Prostate gland (tissue), 2 donors: ENCODE measurements at regions of chr12 and their contacts with region 1.

Region 1: GRCh38 chr12:26434299-26435068 is 239.1 kb downstream of the SSPN start:
- DNase-seq: no peak
- H3K4me3 ChIP-seq: no peak overlapping the region
- H3K27ac ChIP-seq: no peak overlapping the region
- H3K4me1 ChIP-seq: no peaks in the 10 kb centered on the region
- H3K27me3 ChIP-seq: no peaks in the 10 kb centered on the region
- CTCF ChIP-seq: peak in 2 of 4 experiments; percentile 65 to 72
- POLR2A ChIP-seq: no peak

Region 2: DNA sequence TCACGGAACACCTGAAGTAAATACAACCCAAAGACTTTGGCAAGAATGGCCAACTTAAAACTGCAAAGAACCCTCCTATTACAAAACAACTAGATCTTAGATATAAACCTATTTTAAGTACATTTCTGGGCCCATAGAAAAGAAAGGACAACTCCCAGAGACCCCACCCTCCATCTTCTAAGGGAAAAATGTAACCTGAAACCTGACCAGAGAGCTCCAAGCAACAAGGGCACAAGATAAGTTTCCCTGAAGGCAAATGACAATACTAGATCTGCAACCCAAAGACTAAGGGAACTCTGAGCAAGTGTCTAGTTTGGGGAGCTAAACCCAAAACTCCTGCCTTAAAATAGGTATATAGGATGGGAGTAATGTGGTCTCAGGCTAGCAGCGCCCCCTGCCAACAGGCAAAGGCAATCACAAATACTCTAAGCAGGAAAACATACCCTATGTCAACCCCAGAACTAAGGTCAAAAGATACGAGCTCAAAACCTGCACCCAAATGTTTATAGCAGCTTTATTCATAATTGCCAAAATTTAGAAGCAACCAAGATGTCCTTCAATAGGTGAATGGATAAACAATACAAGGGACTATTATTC is 179.6 kb after region 1 on chr12:
- intact Hi-C with region 1: loop called (anchors 10 kb)
- DNase-seq: no peak
- H3K4me3 ChIP-seq: no peak overlapping the region
- H3K27ac ChIP-seq: no peak overlapping the region
- H3K4me1 ChIP-seq: no peaks in the 10 kb centered on the region
- H3K27me3 ChIP-seq: no peaks in the 10 kb centered on the region
- CTCF ChIP-seq: peak in 2 of 4 experiments; percentile 21 to 33
- POLR2A ChIP-seq: no peak

Region 3: GRCh38 chr12:27048822-27049752 is 614.6 kb after region 1 on chr12:
- intact Hi-C with region 1: no loop called
- DNase-seq: no peak
- H3K4me3 ChIP-seq: no peak overlapping the region
- H3K27ac ChIP-seq: no peak overlapping the region
- H3K4me1 ChIP-seq: no peaks in the 10 kb centered on the region
- H3K27me3 ChIP-seq: no peaks in the 10 kb centered on the region
- CTCF ChIP-seq: no peak
- POLR2A ChIP-seq: no peak